Esophagus squamous epithelium (tissue), 5 donors: ENCODE measurements at regions of chr15 and their contacts with region 1.

Region 1: GRCh38 chr15:78640840-78641719 is at the start of gene CHRNB4:
- DNase-seq: no peak
- H3K4me3 ChIP-seq: peak within 1 kb of the TSS; percentile 31 to 69 (median 46)
- H3K27ac ChIP-seq: peak within 1 kb of the TSS in 3 of 4 donors; percentile 8 to 55 (median 54)
- H3K4me1 ChIP-seq: peaks cover 12 to 18% (median 13%) of the 10 kb centered on the region in 3 donors
- H3K27me3 ChIP-seq: peaks cover 0 to 28% (median 1%) of the 10 kb centered on the region in 4 donors
- CTCF ChIP-seq: peak in 2 of 6 experiments; percentile 13 to 41
- POLR2A ChIP-seq: no peak
- total RNA-seq, gene CHRNB4: 0.09 to 0.72 (median 0.43) TPM

Region 2: DNA sequence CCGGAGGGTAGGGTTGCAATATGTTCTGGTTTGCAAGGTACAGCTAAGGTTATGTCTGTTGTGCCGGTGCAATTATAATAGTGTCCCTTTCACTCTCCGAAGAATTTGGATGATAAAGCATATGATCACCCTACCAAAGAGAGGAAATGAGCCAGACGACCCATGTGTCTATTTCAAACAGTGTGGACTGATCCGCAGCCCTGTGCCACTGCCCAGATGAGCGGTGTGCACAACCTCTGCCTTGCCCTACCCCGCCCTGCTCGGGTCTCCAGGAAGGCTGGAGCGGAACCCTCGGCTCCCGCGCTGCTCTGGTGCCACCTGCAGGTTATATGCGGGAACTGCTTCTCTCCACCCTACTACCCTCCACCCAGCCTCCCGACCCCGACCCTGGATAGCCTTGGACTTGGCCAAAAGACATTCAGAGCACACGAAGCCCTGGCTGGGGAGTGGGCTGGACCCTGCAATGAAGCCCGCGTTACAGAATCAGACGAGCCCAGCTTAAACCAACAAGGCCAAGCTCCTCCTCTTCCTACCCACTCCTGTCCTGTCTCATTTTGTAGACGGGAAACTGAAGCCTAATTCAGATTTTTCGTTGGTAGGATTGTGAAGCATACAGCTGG is 68.3 kb after region 1 on chr15:
- intact Hi-C with region 1: loop called (anchors 5 kb)
- DNase-seq: no peak
- H3K4me3 ChIP-seq: peak overlapping the region in 1 of 4 donors; percentile 38
- H3K27ac ChIP-seq: no peak overlapping the region
- H3K4me1 ChIP-seq: peaks cover 0 to 8% (median 0%) of the 10 kb centered on the region in 3 donors
- H3K27me3 ChIP-seq: peaks cover 0 to 20% (median 0%) of the 10 kb centered on the region in 4 donors
- CTCF ChIP-seq: peak; percentile 80 to 93 (median 88)
- POLR2A ChIP-seq: no peak